ENCODE measurements at regions of chr4 and their contacts with region 1.

Region 1: GRCh38 chr4:55312489-55313101 is 33.4 kb upstream of the SRD5A3 start:
- DNase-seq: peak in 1 of 2 donors; percentile 69
- ATAC-seq: peak in 2 of 3 donors; percentile 68 to 70
- H3K4me3 ChIP-seq: no peak overlapping the region
- H3K4me3 Mint-ChIP-seq: no peak overlapping the region
- H3K27ac ChIP-seq: no peak overlapping the region
- H3K27ac Mint-ChIP-seq: no peak overlapping the region
- H3K4me1 ChIP-seq: no peaks in the 10 kb centered on the region
- H3K4me1 Mint-ChIP-seq: no peaks in the 10 kb centered on the region
- H3K27me3 ChIP-seq: no peaks in the 10 kb centered on the region
- H3K27me3 Mint-ChIP-seq: peaks cover 0 to 5% of the 10 kb centered on the region in 2 donors
- CTCF ChIP-seq: peak; percentile 54

Region 2: DNA sequence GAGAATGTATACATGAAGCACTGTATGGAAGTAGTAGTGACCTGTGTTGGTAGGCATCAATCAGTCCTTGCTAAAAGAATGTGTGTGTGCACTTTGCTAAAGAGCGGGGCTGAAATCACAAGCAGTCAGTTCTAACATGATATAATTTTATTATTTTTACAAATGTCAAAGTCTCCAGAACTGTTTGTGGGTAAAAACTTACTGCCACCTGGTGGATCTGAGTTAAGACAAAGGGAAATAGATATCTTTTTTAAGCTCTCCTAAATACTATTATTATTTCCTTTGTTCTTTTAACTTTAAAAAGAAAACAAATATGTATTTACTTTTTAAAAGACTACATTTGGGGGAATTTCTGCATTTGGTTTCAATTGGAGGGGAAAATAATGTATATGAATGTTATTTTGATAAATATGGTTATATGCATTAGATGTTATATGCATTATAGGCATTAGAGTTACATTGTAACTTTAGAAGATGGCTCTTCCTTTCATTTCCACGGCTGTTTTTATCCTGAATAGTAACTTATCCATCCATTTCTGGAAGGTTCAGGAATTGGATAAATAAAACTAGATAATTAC is 241.9 kb after region 1 on chr4:
- intact Hi-C with region 1: loop called (anchors 1 kb)
- DNase-seq: peak in 1 of 2 donors; percentile 69
- ATAC-seq: peak in 2 of 3 donors; percentile 35 to 39
- H3K4me3 ChIP-seq: no peak overlapping the region
- H3K4me3 Mint-ChIP-seq: no peak overlapping the region
- H3K27ac ChIP-seq: no peak overlapping the region
- H3K27ac Mint-ChIP-seq: no peak overlapping the region
- H3K4me1 ChIP-seq: no peaks in the 10 kb centered on the region
- H3K4me1 Mint-ChIP-seq: no peaks in the 10 kb centered on the region
- H3K27me3 ChIP-seq: no peaks in the 10 kb centered on the region
- H3K27me3 Mint-ChIP-seq: peaks cover 23 to 35% of the 10 kb centered on the region in 2 donors
- CTCF ChIP-seq: peak; percentile 30

Region 3: DNA sequence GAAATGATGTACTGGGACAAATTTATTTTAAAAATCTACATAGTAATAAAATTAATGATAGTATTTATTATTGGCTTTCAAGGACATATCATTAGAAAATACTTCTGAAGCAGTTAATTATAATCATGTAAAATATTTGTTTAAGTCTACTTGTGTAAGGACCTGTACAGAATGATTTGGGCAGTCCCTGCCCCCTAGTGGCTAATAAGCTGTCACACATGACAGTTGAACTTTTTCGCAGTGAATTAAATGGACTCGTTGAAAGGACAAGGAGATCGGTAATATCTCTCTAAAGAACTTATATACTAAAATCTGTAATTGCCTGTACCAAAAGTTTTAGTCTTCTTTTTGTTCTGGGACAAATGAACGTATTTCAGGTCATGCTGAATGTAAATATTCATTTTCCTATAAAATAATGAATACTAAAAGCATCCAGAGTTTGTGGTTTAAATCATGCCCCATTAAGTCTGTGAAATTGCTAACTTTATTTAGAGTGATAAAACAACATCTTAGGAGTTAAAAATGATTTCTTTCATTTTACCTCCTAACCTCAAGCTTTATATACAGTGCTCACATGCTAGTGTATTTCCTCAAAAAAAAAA is 554.5 kb after region 1 on chr4:
- intact Hi-C with region 1: loop called (anchors 5 kb)
- DNase-seq: peak in 1 of 2 donors; percentile 73
- ATAC-seq: peak; percentile 87 to 93 (median 88)
- H3K4me3 ChIP-seq: no peak overlapping the region
- H3K4me3 Mint-ChIP-seq: no peak overlapping the region
- H3K27ac ChIP-seq: no peak overlapping the region
- H3K27ac Mint-ChIP-seq: peak overlapping the region; percentile 45 to 83
- H3K4me1 ChIP-seq: no peaks in the 10 kb centered on the region
- H3K4me1 Mint-ChIP-seq: peaks cover 10 to 11% of the 10 kb centered on the region in 2 donors
- H3K27me3 ChIP-seq: no peaks in the 10 kb centered on the region
- H3K27me3 Mint-ChIP-seq: no peaks in the 10 kb centered on the region
- CTCF ChIP-seq: peak; percentile 91

Region 4: GRCh38 chr4:57168982-57169381 is 1856.4 kb after region 1 on chr4:
- intact Hi-C with region 1: no loop called
- DNase-seq: no peak
- ATAC-seq: no peak
- H3K4me3 ChIP-seq: no peak overlapping the region
- H3K4me3 Mint-ChIP-seq: no peak overlapping the region
- H3K27ac ChIP-seq: no peak overlapping the region
- H3K27ac Mint-ChIP-seq: no peak overlapping the region
- H3K4me1 ChIP-seq: peaks cover 5% of the 10 kb centered on the region
- H3K4me1 Mint-ChIP-seq: peaks cover 8 to 10% of the 10 kb centered on the region in 2 donors
- H3K27me3 ChIP-seq: peaks cover 4% of the 10 kb centered on the region
- H3K27me3 Mint-ChIP-seq: peaks cover 20 to 34% of the 10 kb centered on the region in 2 donors
- CTCF ChIP-seq: no peak